IMR-90 (cell line): ENCODE measurements at regions of chr9 and their contacts with region 1.

Region 1: DNA sequence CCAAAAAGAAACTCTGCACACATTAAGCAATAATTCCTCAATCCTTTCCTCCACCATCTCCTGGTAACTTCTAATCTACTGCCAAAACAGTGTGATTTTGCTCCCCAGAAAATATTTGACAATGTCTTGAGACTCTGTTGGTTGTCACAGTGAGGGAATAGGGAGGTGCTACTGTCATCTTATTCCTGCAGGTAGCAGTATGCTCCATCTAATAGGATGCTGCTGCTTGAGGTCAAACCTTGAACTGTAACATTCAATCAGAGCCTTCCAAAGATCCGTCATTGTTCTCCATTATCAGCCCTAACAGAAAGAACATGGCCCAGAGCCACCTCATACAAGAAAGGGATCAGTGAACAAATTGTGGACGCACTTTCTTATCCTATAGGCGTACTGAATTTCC is 514.7 kb upstream of the GRIN3A start:
- DNase-seq: no peak
- ATAC-seq: no peak
- H3K4me3 ChIP-seq: no peak overlapping the region
- H3K27ac ChIP-seq: no peak overlapping the region
- H3K4me1 ChIP-seq: no peaks in the 10 kb centered on the region
- H3K27me3 ChIP-seq: no peaks in the 10 kb centered on the region
- CTCF ChIP-seq: no peak
- POLR2A ChIP-seq: no peak
- RAD21 ChIP-seq: no peak

Region 2: GRCh38 chr9:101858026-101858425 is 395.1 kb before region 1 on chr9:
- CTCF ChIA-PET with region 1: no interaction called
- POLR2A ChIA-PET with region 1: no interaction called
- dilution Hi-C with region 1: no loop called
- in situ Hi-C with region 1: no loop called
- intact Hi-C with region 1: loop called (anchors 5 kb)
- DNase-seq: no peak
- ATAC-seq: no peak
- H3K4me3 ChIP-seq: no peak overlapping the region
- H3K27ac ChIP-seq: no peak overlapping the region
- H3K4me1 ChIP-seq: no peaks in the 10 kb centered on the region
- H3K27me3 ChIP-seq: no peaks in the 10 kb centered on the region
- CTCF ChIP-seq: no peak
- POLR2A ChIP-seq: no peak
- RAD21 ChIP-seq: no peak